ENCODE measurements at regions of chr10 and their contacts with region 1.

Region 1: GRCh38 chr10:7272008-7272407 is 138.8 kb downstream of the SFMBT2 start:
- DNase-seq: no peak
- H3K4me3 Mint-ChIP-seq: no peak overlapping the region
- H3K27ac Mint-ChIP-seq: peak overlapping the region; percentile 62
- H3K4me1 Mint-ChIP-seq: peaks cover 53% of the 10 kb centered on the region
- H3K27me3 Mint-ChIP-seq: no peaks in the 10 kb centered on the region

Region 2: GRCh38 chr10:6929148-6929830 is 342.7 kb before region 1 on chr10:
- intact Hi-C with region 1: loop called (anchors 5 kb)
- DNase-seq: no peak
- H3K4me3 Mint-ChIP-seq: no peak overlapping the region
- H3K27ac Mint-ChIP-seq: no peak overlapping the region
- H3K4me1 Mint-ChIP-seq: peaks cover 42% of the 10 kb centered on the region
- H3K27me3 Mint-ChIP-seq: peaks cover 6% of the 10 kb centered on the region

Region 3: DNA sequence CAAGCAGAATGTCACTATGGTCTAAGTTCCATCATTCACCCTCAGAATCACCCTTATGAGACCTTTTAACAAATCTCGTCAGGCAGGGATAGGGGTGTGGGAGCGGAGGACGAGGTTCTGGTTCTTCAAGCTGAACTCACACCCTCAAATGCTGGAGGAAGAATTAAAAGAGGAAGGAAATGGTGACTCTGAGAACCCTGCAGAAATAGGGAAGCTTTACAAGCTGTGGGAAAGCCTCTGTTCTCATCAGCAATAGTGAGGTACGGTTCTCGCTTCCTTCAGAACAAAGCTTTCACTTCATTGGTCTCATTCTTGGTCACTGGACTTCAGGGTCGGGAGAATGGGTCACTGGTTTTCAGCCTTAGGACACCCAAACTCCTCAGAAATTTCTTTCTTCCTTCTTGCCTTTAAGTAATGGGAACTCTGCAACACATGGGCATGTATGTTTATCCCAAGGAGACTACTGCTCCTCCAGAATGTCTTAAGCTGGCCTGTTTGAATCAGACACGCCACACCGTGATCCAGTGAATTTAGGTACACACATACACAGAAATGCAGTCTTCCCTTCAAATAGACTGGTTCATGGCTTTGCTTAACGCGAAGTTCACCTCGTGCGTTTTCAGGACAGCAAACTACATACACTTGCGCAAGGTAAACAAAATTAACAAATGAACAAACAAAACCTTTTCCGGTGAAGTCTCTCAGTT is 87.2 kb before region 1 on chr10:
- intact Hi-C with region 1: loop called (anchors 2 kb)
- DNase-seq: no peak
- H3K4me3 Mint-ChIP-seq: peak overlapping the region; percentile 47
- H3K27ac Mint-ChIP-seq: peak overlapping the region; percentile 87
- H3K4me1 Mint-ChIP-seq: peaks cover 58% of the 10 kb centered on the region
- H3K27me3 Mint-ChIP-seq: no peaks in the 10 kb centered on the region

Region 4: GRCh38 chr10:7192831-7193361 is 79.1 kb before region 1 on chr10:
- intact Hi-C with region 1: loop called (anchors 2 kb)
- DNase-seq: peak; percentile 62
- H3K4me3 Mint-ChIP-seq: peak overlapping the region; percentile 58
- H3K27ac Mint-ChIP-seq: peak overlapping the region; percentile 97
- H3K4me1 Mint-ChIP-seq: peaks cover 59% of the 10 kb centered on the region
- H3K27me3 Mint-ChIP-seq: no peaks in the 10 kb centered on the region

Region 5: GRCh38 chr10:7239312-7239985 is 32.6 kb before region 1 on chr10:
- intact Hi-C with region 1: loop called (anchors 1 kb)
- DNase-seq: no peak
- H3K4me3 Mint-ChIP-seq: no peak overlapping the region
- H3K27ac Mint-ChIP-seq: peak overlapping the region; percentile 13
- H3K4me1 Mint-ChIP-seq: peaks cover 40% of the 10 kb centered on the region
- H3K27me3 Mint-ChIP-seq: no peaks in the 10 kb centered on the region

Region 6: DNA sequence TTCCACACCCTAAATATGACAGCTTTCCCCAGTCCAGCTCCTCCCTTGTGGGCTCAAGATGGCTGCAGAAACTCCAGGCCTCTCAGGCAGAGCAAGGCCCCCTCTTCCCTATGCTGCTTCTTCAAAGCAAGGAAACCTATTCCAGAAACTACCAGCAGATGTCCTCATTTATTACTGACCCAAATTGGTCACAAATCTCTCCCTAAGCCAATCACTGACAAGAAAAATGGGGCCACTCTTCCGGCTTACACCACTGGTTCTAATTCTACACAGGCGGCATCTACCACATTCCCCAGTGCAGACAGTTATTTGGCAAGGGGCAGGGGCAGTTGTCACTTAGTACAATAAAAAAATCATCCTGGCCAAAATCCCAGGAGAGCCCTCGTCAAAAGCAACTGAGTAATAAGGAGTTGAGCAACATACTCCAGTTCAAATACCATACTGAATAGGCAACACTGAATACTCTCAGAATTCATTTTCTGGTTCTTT is 11.6 kb before region 1 on chr10:
- intact Hi-C with region 1: loop called (anchors 1 kb)
- DNase-seq: no peak
- H3K4me3 Mint-ChIP-seq: peak overlapping the region; percentile 40
- H3K27ac Mint-ChIP-seq: peak overlapping the region; percentile 62
- H3K4me1 Mint-ChIP-seq: peaks cover 54% of the 10 kb centered on the region
- H3K27me3 Mint-ChIP-seq: no peaks in the 10 kb centered on the region